ENCODE measurements at regions of chr5 and their contacts with region 1.

Region 1: DNA sequence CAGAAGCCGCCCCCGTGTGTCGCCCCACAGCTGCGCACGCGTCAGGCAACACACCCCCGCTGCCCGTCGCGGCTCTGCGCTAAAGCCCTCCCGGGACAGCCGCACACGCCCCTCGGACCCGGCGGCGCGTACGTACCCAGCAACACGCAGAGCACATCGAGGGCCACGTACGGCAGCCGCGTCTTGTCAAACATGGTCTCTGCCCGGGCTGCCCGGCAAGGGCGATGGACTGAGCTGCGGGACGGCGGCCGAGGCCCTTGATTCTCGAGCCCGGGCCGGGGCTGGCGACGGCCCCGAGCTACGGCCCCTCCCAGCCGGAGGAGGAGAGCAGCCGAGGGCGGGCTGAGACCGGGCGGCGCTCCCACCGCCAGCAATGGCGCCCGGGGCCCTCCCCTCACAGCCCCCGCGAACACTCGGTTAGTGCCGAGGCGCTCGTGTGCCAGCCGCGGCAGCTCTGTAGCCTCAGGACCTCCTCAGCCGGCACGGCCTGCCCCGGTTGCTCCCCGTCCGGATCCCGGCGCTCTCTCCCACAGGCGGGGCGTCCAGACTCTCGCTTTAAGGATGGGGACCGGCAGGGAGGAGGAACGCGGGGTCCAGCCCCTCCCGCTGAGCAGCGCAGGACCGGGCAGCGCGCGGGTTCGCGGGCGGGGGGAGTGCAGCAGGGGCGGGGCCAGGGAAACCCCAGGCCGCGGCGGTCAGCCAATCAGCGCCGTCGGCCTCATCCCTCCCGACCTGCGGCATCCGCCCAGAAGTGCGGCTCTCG is at the start of gene PLPP1:
- DNase-seq: peak; percentile 90 to 95 (median 94)
- ATAC-seq: peak; percentile 94
- H3K4me3 ChIP-seq: peak within 1 kb of the TSS; percentile 81
- H3K4me1 ChIP-seq: peaks cover 13% of the 10 kb centered on the region
- CTCF ChIP-seq: no peak
- total RNA-seq, gene PLPP1: 88.8 to 132 (median 122) TPM

Region 2: DNA sequence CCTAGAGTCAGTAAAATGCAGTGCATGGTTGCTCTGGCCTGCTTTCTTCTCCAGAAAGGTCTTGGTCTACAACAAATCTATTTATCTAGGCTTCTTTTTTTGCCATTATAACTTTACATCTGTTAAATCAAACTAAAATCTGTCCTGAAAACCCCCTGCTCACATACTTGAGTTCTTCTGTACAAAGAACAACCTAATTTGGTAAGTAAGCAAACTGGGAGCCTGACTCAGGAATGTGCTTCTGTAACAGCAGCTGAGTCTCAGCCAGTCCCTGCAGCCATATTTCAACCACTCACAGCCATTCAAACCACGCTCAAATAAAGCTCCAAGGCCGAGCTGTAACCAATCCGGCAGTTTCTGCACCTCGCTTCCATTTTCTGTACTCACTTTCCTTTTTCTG is 95.6 kb before region 1 on chr5:
- intact Hi-C with region 1: loop called in 1 of 2 experiments (anchors 10 kb)
- DNase-seq: no peak
- ATAC-seq: peak; percentile 17
- H3K4me3 ChIP-seq: no peak overlapping the region
- H3K4me1 ChIP-seq: peaks cover 8% of the 10 kb centered on the region
- CTCF ChIP-seq: no peak

Region 3: GRCh38 chr5:55601204-55601618 is 66.6 kb after region 1 on chr5:
- intact Hi-C with region 1: loop called in 1 of 2 experiments (anchors 10 kb)
- DNase-seq: peak; percentile 68 to 83 (median 70)
- ATAC-seq: peak; percentile 89
- H3K4me3 ChIP-seq: no peak overlapping the region
- H3K4me1 ChIP-seq: peaks cover 42% of the 10 kb centered on the region
- CTCF ChIP-seq: no peak

Region 4: GRCh38 chr5:56375011-56375410 is 840.4 kb after region 1 on chr5:
- intact Hi-C with region 1: no loop called
- DNase-seq: no peak
- ATAC-seq: no peak
- H3K4me3 ChIP-seq: no peak overlapping the region
- H3K4me1 ChIP-seq: no peaks in the 10 kb centered on the region
- CTCF ChIP-seq: no peak

Measured in mucosa of descending colon (tissue), 3 donors.